Heart right ventricle (tissue), 16 donors: ENCODE measurements at regions of chr18 and their contacts with region 1.

Region 1: DNA sequence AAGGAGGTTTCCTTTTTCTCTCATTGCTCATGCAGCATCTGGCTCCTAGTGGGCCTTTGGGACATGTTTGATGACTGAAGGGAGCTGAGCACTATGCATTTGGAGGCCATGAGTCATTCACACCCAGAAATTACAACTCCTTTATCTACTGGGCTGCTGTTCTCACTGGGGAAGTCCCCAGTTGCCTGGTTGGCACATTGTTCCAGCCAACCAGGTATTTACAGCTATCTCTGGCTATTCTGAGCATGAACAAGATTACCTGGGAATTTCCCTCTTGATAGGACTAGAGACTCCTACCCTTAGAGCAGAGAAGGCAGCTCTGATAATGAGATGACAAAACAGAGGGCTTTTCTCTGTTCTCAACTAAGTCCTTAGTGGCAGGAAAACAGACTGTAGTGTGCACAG is 206.5 kb downstream of the SETBP1 start:
- DNase-seq: peak in 1 of 2 donors; percentile 32
- ATAC-seq: peak; percentile 60 to 97 (median 86)
- H3K4me3 ChIP-seq: no peak overlapping the region
- H3K27ac ChIP-seq: no peak overlapping the region
- H3K4me1 ChIP-seq: peaks cover 0 to 33% (median 12%) of the 10 kb centered on the region in 9 donors
- H3K27me3 ChIP-seq: peaks cover 0 to 22% (median 7%) of the 10 kb centered on the region in 7 donors
- CTCF ChIP-seq: peak in 2 of 9 donors; percentile 11

Region 2: DNA sequence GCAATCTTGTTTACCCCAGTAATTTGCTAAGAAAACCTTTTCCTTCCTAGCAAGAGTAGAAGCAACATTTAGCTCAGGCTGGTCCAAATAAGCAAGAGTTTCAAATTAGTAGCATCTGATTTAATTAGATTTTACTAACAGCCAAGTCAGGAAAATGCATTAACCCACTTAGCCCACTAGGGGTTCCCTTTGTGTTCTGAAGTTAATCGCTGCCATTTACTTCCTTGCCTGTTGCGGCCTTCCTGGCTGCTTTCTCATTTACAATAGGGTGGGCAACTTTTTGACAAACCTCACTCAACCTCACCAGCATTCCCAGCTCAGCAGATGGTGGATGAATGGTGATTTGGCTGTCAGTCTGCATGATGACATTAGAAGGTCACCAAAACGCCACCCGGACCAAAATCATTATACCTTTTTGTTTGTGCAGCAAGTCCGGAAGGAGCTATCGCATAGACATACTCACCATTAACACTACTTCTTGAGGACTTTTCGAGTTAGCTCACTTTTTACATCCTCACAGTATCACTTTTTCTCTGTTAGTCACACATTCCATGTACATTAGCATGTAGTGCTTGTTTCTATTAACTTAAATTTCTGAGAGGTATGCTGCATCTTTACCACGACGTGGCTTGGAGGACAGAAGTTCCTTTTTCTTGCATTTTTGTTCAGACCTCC is 308.1 kb before region 1 on chr18:
- intact Hi-C with region 1: loop called in 1 of 10 experiments (anchors 10 kb)
- DNase-seq: no peak
- ATAC-seq: no peak
- H3K4me3 ChIP-seq: no peak overlapping the region
- H3K27ac ChIP-seq: no peak overlapping the region
- H3K4me1 ChIP-seq: no peaks in the 10 kb centered on the region
- H3K27me3 ChIP-seq: no peaks in the 10 kb centered on the region
- CTCF ChIP-seq: peak; percentile 33 to 64 (median 52)

Region 3: DNA sequence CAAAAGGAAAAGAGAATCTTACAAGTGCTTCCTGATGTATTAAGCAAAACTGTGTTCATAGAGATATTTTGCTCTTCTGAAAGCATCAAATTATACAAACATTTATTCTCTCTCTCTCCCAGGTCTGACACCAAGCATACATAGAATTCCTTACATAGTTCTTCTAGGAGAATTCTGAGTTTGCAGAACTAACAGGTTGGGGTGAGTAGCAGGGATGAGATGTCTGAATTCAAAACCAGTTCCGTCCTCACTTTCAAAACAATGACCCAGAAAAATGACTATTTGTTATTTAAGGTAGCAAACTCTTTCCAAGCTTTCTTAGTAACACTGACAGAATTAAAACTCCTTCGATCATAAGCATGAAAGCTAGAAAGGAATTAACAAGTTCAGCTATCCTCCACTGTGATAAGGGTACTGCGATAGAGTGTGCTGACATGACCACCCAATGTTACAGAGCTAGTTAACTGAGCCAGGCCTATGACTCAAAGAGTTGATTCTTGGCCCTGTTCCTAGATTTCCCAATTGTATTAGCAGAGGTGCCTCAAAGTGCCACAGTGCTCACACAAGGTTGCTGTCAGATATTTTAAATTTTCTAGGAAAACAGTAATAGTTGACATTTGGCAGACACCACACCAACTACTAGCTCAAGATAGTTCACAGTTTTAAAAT is 292.3 kb before region 1 on chr18:
- intact Hi-C with region 1: loop called in 1 of 10 experiments (anchors 10 kb)
- DNase-seq: peak in 1 of 2 donors; percentile 13
- ATAC-seq: peak in 6 of 8 donors; percentile 52 to 88 (median 72)
- H3K4me3 ChIP-seq: no peak overlapping the region
- H3K27ac ChIP-seq: peak overlapping the region in 6 of 10 donors; percentile 3 to 41 (median 32)
- H3K4me1 ChIP-seq: peaks cover 7 to 50% (median 18%) of the 10 kb centered on the region in 9 donors
- H3K27me3 ChIP-seq: no peaks in the 10 kb centered on the region
- CTCF ChIP-seq: no peak

Region 4: DNA sequence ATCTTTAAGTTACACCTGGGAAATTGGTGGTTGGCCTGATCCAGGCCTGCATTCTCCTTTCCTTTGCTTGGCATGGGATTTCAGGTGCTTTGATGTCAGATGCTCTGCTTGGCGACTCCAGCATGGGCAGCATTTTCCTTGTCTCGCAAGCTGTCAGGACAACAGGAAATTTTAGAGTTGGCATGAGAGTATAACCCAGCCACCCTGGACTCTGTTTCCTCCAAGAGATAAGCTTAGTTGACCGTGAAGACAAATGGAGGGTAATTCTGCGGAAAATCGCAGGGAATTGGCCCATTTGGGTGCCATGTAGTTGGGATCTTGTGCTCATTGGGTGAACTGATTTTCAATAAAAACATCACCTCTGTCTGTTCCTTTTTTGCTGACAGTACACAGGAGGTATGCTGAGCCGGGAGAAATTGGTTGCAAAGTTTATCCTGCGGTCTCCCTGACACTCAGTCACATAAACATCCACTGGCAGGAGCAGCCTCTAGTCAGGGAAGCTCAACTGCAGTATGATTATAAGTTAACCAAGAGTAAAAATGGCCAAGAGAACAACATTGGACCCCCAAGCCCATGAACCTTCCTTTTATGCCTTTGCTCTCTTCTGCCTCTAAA is 203.4 kb after region 1 on chr18:
- intact Hi-C with region 1: no loop called
- DNase-seq: no peak
- ATAC-seq: no peak
- H3K4me3 ChIP-seq: no peak overlapping the region
- H3K27ac ChIP-seq: no peak overlapping the region
- H3K4me1 ChIP-seq: peaks cover 0 to 5% (median 0%) of the 10 kb centered on the region in 9 donors
- H3K27me3 ChIP-seq: peaks cover 0 to 6% (median 0%) of the 10 kb centered on the region in 7 donors
- CTCF ChIP-seq: no peak